ENCODE measurements at regions of chr1 and their contacts with region 1.

Region 1: GRCh38 chr1:87335175-87335884 is 6.7 kb downstream of the LMO4 start:
- DNase-seq: peak; percentile 72
- H3K4me3 Mint-ChIP-seq: peak overlapping the region; percentile 94
- H3K27ac Mint-ChIP-seq: peak overlapping the region; percentile 87
- H3K4me1 Mint-ChIP-seq: peaks cover 32% of the 10 kb centered on the region
- H3K27me3 Mint-ChIP-seq: no peaks in the 10 kb centered on the region
- CTCF ChIP-seq: no peak

Region 2: DNA sequence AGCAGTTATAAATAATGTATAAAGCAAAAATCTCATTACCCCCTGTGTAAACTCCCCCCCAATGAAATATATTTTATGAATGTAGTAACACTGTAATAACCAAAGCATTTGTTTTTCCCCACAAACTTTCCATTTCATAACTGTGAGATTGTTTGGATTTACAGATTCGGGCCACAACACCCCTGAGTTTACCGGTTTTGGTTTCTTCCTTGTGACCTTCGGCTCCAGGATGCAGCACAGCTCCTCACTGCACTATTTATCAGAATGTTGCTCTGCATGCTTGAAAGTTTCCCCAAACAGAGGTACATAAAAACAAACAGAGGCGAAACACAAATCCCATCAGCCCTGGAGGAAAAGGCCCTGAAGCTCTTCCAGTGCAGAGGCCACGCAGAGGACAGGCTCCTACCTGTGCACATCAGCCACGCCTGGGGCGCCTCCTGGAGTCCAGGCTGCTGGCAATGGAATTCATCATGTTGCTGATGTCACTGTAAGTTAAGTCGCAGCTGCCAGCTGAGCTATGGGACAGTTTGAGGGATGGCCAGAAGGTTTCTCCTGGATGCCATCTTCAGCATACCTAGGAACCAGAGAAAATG is 115.4 kb after region 1 on chr1:
- CTCF ChIA-PET with region 1: interaction called, 11 read pairs
- intact Hi-C with region 1: loop called (anchors 2 kb)
- DNase-seq: peak; percentile 80
- H3K4me3 Mint-ChIP-seq: no peak overlapping the region
- H3K27ac Mint-ChIP-seq: peak overlapping the region; percentile 13
- H3K4me1 Mint-ChIP-seq: peaks cover 26% of the 10 kb centered on the region
- H3K27me3 Mint-ChIP-seq: no peaks in the 10 kb centered on the region
- CTCF ChIP-seq: peak; percentile 52

Region 3: DNA sequence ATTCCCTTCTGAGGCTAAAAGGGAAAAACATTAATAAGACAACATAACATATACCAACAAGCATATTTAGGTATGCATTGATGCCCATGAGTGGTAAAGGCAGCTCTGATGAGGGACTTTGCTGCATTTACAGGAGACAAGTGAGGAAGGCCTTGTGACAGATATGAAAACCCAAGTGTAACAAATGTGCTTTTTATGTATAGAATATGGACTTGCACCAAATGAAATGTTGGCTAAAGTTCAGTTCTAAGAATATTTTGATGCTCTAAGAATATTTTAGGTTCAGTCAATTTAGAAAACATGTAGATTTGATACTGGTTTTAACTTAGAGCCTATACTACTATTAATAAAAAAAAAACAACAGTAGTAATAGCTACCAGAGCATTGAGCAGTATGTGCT is 418.0 kb after region 1 on chr1:
- CTCF ChIA-PET with region 1: interaction called, 10 read pairs
- intact Hi-C with region 1: no loop called
- DNase-seq: no peak
- H3K4me3 Mint-ChIP-seq: no peak overlapping the region
- H3K27ac Mint-ChIP-seq: no peak overlapping the region
- H3K4me1 Mint-ChIP-seq: peaks cover 9% of the 10 kb centered on the region
- H3K27me3 Mint-ChIP-seq: no peaks in the 10 kb centered on the region
- CTCF ChIP-seq: no peak

Region 4: GRCh38 chr1:87805666-87806378 is 470.5 kb after region 1 on chr1:
- CTCF ChIA-PET with region 1: interaction called, 5 read pairs
- intact Hi-C with region 1: loop called (anchors 5 kb)
- DNase-seq: peak; percentile 66
- H3K4me3 Mint-ChIP-seq: peak overlapping the region; percentile 62
- H3K27ac Mint-ChIP-seq: peak overlapping the region; percentile 92
- H3K4me1 Mint-ChIP-seq: peaks cover 61% of the 10 kb centered on the region
- H3K27me3 Mint-ChIP-seq: no peaks in the 10 kb centered on the region
- CTCF ChIP-seq: no peak

Measured in Calu3 (cell line).